Activated T-helper 1 cell treated with anti-CD3 and anti-CD28 coated beads, Interleukin-12 subunit alpha, Interleukin-12 subunit beta, Interleukin-2, Interleukin-4 antibody, amounts not matched to agents 30 ng/mL and 10 ng/mL and 1 ng/mL, durations not matched to agents 14 hours and 24 hours and 36 hours (primary cell): ENCODE measurements at regions of chr15 and their contacts with region 1.

Region 1: DNA sequence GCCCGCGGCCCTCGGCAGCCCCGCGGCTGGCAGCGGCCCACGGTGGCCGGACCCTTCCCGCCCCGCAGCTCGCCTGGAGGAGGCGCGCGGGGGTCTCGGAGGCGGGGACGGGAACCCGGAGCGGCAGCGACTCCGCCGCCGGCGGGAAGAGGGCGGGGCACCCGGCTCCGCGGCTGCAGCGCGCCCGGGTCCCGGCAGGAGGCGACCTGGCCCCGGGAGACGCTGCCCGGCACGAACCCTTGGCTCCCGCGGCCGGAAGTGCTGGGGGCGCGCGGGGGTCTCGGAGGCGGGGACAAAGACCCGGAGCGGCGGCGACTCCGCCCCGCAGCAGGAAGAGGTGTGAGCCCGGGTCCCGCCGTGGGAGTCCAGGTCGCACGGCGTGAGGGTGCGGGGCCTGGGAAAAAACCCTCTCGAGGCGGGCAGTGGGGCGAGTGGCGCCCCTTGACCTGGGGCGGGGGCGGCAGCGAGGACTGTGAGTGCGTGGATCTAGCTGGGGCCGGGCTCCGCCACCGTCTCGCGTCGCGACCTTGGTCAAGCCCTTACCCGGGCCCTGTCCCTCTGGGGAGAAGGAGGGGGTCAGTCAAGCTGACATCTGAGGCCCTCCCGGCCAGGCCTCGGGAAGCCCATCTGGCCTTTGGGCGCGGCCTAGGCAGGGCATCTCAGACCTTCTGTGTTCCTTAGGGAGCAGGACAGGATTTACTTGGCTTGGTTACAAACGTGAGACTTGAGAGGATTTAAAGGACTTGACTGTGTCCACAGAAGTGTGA is at the start of gene CIB2:
- DNase-seq: peak; percentile 82
- H3K4me3 Mint-ChIP-seq: peak within 1 kb of the TSS; percentile 84
- H3K27ac Mint-ChIP-seq: peak within 1 kb of the TSS; percentile 57
- H3K4me1 Mint-ChIP-seq: peaks cover 22% of the 10 kb centered on the region
- H3K27me3 Mint-ChIP-seq: peaks cover 11% of the 10 kb centered on the region
- total RNA-seq, gene CIB2: 1.2 and 1.9 TPM in 2 replicates

Region 2: DNA sequence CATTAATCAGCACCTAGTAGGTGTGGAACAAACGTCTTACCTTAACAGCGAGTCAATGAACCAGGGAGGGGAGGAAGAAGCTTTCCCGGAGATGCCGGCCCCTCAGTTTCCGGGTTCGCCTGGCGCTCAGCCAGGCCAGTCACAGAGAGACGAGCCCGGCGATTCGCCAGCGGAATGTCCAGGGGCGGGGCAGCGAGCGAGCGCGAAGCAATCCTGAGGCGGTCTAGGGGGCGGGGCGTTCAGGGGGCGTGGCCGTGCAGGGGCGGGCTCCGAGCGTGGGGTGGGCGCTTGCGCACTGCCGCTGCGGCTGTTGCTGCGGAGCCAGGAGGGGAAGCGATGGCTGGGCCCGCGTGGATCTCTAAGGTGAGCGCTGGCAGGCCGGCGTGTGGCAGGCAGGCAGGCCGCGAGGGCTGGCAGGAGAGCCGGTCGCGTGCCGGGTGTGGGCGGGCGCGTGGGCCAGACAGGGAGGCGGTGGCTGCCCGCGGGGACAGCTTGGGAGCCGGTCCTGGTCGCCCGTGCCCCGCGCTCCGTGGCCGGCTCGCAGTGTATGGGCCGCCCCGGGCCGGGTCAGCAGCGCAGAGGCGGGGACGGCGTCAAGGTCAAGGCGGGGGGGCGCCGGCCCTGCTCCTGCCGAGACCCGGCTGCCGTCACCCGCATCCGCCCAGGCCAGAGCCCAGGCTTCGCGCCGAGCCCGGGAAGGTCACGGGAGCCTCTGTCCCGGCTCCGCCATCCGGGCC is 17.8 kb after region 1 on chr15 and contains the start of gene IDH3A:
- intact Hi-C with region 1: loop called (anchors 1 kb)
- DNase-seq: peak; percentile 99
- H3K4me3 Mint-ChIP-seq: peak within 1 kb of the TSS; percentile 94
- H3K27ac Mint-ChIP-seq: peak within 1 kb of the TSS; percentile 89
- H3K4me1 Mint-ChIP-seq: peaks cover 41% of the 10 kb centered on the region
- H3K27me3 Mint-ChIP-seq: no peaks in the 10 kb centered on the region
- total RNA-seq, gene IDH3A: 160 and 163 TPM in 2 replicates

Region 3: GRCh38 chr15:78170848-78171773 is 39.6 kb after region 1 on chr15:
- intact Hi-C with region 1: loop called (anchors 5 kb)
- DNase-seq: no peak
- H3K4me3 Mint-ChIP-seq: no peak overlapping the region
- H3K27ac Mint-ChIP-seq: peak overlapping the region; percentile 61
- H3K4me1 Mint-ChIP-seq: peaks cover 63% of the 10 kb centered on the region
- H3K27me3 Mint-ChIP-seq: no peaks in the 10 kb centered on the region

Region 4: GRCh38 chr15:78195735-78196201 is 64.3 kb after region 1 on chr15:
- intact Hi-C with region 1: loop called (anchors 1 kb)
- DNase-seq: peak; percentile 26
- H3K4me3 Mint-ChIP-seq: no peak overlapping the region
- H3K27ac Mint-ChIP-seq: no peak overlapping the region
- H3K4me1 Mint-ChIP-seq: no peaks in the 10 kb centered on the region
- H3K27me3 Mint-ChIP-seq: peaks cover 14% of the 10 kb centered on the region

Region 5: DNA sequence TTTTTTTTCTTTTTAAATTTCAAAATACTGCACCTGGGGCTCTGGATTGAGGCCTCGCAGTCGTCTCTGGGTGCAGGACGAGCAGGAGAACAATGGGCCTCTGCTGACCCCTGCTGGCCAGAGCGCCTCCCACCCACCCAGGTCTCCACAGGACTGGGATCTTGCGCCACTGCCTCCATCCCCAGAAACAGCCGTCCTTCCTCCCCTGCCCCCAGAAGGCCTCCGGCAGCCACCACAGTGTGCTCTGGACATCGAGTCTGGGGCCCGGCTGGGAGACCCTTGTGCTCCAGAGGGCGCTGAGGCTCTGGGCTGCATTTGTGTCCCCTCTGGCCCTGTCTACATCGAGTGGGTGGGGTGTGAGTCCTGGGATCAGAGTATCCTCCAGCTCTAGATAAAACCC is 109.5 kb after region 1 on chr15:
- intact Hi-C with region 1: loop called (anchors 1 kb)
- DNase-seq: peak; percentile 70
- H3K4me3 Mint-ChIP-seq: no peak overlapping the region
- H3K27ac Mint-ChIP-seq: no peak overlapping the region
- H3K4me1 Mint-ChIP-seq: no peaks in the 10 kb centered on the region
- H3K27me3 Mint-ChIP-seq: peaks cover 16% of the 10 kb centered on the region